Activated CD8-positive, alpha-beta T cell treated with anti-CD3 and anti-CD28 coated beads, Interleukin-2, amount 10 ng/mL, durations not matched to agents 7 days and 5 days (primary cell): ENCODE measurements at regions of chr2 and their contacts with region 1.

Region 1: GRCh38 chr2:19347619-19348562 is 10.5 kb downstream of the OSR1 start:
- DNase-seq: peak; percentile 97
- ATAC-seq: peak; percentile 93
- H3K4me3 Mint-ChIP-seq: peak overlapping the region; percentile 94
- H3K27ac Mint-ChIP-seq: peak overlapping the region; percentile 99
- H3K4me1 Mint-ChIP-seq: peaks cover 23% of the 10 kb centered on the region
- H3K27me3 Mint-ChIP-seq: peaks cover 30% of the 10 kb centered on the region

Region 2: DNA sequence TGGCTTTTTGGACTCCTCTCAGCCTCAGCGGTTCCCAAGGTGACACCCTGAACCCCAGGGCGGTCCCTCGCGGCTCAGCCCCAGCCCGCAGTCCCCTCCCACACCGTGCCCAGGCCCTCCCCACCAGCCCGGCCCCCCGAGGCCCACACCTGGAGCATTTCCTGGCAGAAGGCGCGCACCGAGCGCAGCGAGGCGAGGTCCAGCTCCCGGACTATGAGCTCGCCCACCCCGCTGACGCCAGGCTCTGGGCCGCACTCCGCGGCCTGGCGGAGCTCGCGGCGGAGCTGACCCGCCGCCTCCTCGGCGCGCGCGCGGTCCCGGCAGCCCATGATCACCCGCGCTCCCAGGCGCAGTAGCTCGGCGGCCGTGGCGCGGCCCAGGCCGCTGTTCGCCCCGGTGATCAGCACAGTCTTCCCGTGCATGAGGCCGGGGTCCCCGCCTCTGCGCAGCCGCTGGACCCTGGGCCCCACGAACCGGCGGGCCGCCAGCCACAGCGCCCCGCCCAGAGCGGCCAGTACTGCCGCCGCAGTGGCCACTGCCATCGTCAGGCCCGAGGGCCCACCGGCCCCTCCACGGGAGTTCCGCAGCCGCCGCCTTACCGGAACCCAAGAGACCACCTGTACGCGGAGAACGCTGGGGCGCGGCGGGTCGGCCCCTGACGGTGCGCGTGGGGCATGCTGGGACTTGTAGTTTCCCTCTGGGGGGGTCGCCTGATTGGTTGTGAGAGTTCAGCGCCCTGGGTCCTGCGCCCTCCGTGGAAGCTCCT is 787.7 kb before region 1 on chr2 and contains the start of gene RDH14:
- CTCF ChIA-PET with region 1: no interaction called
- POLR2A ChIA-PET with region 1: interaction called, 11 read pairs
- DNase-seq: peak; percentile 95
- ATAC-seq: peak; percentile 92
- H3K4me3 Mint-ChIP-seq: peak within 1 kb of the TSS; percentile 89
- H3K27ac Mint-ChIP-seq: peak within 1 kb of the TSS; percentile 96
- H3K4me1 Mint-ChIP-seq: peaks cover 34% of the 10 kb centered on the region
- H3K27me3 Mint-ChIP-seq: no peaks in the 10 kb centered on the region
- total RNA-seq, gene RDH14: 14.6 to 15.7 TPM

Region 3: DNA sequence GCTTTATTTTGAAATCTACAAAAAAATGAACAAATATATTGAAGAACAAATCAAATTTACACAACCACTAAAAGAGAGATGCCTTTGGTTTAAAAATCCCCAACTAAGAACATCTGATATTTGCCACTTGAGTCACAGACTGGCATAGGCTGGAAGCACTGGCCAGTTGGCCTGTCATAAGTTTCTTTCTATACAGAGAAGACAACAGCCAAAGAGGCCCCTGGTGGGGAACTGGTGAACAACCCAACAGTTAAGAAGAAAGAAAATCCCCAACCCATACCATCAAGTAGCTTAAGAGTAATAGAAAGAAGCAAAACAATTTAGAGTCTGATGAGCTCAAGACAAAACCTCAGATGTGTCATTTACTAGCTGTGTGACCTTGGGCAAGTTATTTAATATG is 34.9 kb before region 1 on chr2:
- CTCF ChIA-PET with region 1: no interaction called
- POLR2A ChIA-PET with region 1: no interaction called
- DNase-seq: no peak
- ATAC-seq: no peak
- H3K4me3 Mint-ChIP-seq: no peak overlapping the region
- H3K27ac Mint-ChIP-seq: no peak overlapping the region
- H3K4me1 Mint-ChIP-seq: no peaks in the 10 kb centered on the region
- H3K27me3 Mint-ChIP-seq: no peaks in the 10 kb centered on the region

Region 4: GRCh38 chr2:19331450-19331849 is 16.4 kb before region 1 on chr2:
- CTCF ChIA-PET with region 1: no interaction called
- POLR2A ChIA-PET with region 1: no interaction called
- DNase-seq: no peak
- ATAC-seq: no peak
- H3K4me3 Mint-ChIP-seq: no peak overlapping the region
- H3K27ac Mint-ChIP-seq: no peak overlapping the region
- H3K4me1 Mint-ChIP-seq: no peaks in the 10 kb centered on the region
- H3K27me3 Mint-ChIP-seq: no peaks in the 10 kb centered on the region

Region 5: GRCh38 chr2:19362755-19363473 is 15.0 kb after region 1 on chr2:
- CTCF ChIA-PET with region 1: interaction called, 18 read pairs
- POLR2A ChIA-PET with region 1: interaction called, 36 read pairs
- DNase-seq: peak; percentile 58
- ATAC-seq: peak; percentile 58
- H3K4me3 Mint-ChIP-seq: peak overlapping the region; percentile 83
- H3K27ac Mint-ChIP-seq: peak overlapping the region; percentile 44
- H3K4me1 Mint-ChIP-seq: peaks cover 38% of the 10 kb centered on the region
- H3K27me3 Mint-ChIP-seq: peaks cover 86% of the 10 kb centered on the region

Region 6: GRCh38 chr2:19474128-19474527 is 126.2 kb after region 1 on chr2:
- CTCF ChIA-PET with region 1: no interaction called
- POLR2A ChIA-PET with region 1: no interaction called
- DNase-seq: peak; percentile 82
- ATAC-seq: peak; percentile 81
- H3K4me3 Mint-ChIP-seq: peak overlapping the region; percentile 4
- H3K27ac Mint-ChIP-seq: no peak overlapping the region
- H3K4me1 Mint-ChIP-seq: peaks cover 15% of the 10 kb centered on the region
- H3K27me3 Mint-ChIP-seq: peaks cover 59% of the 10 kb centered on the region

Region 7: GRCh38 chr2:19863303-19864041 is 515.6 kb after region 1 on chr2:
- CTCF ChIA-PET with region 1: interaction called, 11 read pairs
- POLR2A ChIA-PET with region 1: interaction called, 3 read pairs
- DNase-seq: peak; percentile 74
- ATAC-seq: peak; percentile 87
- H3K4me3 Mint-ChIP-seq: no peak overlapping the region
- H3K27ac Mint-ChIP-seq: no peak overlapping the region
- H3K4me1 Mint-ChIP-seq: peaks cover 10% of the 10 kb centered on the region
- H3K27me3 Mint-ChIP-seq: no peaks in the 10 kb centered on the region